Ovary (tissue), 10 donors: ENCODE measurements at regions of chr5 and their contacts with region 1.

Region 1: GRCh38 chr5:126594676-126595485 is at the start of gene ALDH7A1:
- DNase-seq: peak; percentile 93 to 95 (median 94)
- H3K4me3 ChIP-seq: peak within 1 kb of the TSS; percentile 48
- H3K27ac ChIP-seq: peak within 1 kb of the TSS; percentile 26 to 70
- H3K4me1 ChIP-seq: peaks cover 3% of the 10 kb centered on the region
- H3K27me3 ChIP-seq: no peaks in the 10 kb centered on the region
- CTCF ChIP-seq: peak in 2 of 3 donors; percentile 30 to 53
- EP300 ChIP-seq: no peak
- POLR2A ChIP-seq: peak; percentile 62
- total RNA-seq, gene ALDH7A1: 28.3 to 133 (median 99.2) TPM

Region 2: GRCh38 chr5:126348855-126349635 is 245.8 kb before region 1 on chr5:
- intact Hi-C with region 1: loop called in 3 of 4 experiments (anchors 5 to 10 kb)
- DNase-seq: no peak
- H3K4me3 ChIP-seq: no peak overlapping the region
- H3K27ac ChIP-seq: peak overlapping the region in 1 of 2 donors; percentile 41
- H3K4me1 ChIP-seq: peaks cover 2% of the 10 kb centered on the region
- H3K27me3 ChIP-seq: no peaks in the 10 kb centered on the region
- CTCF ChIP-seq: no peak
- EP300 ChIP-seq: no peak
- POLR2A ChIP-seq: no peak

Region 3: GRCh38 chr5:126544087-126544740 is 50.7 kb before region 1 on chr5:
- intact Hi-C with region 1: loop called in 3 of 4 experiments (anchors 5 to 10 kb)
- DNase-seq: no peak
- H3K4me3 ChIP-seq: no peak overlapping the region
- H3K27ac ChIP-seq: no peak overlapping the region
- H3K4me1 ChIP-seq: no peaks in the 10 kb centered on the region
- H3K27me3 ChIP-seq: no peaks in the 10 kb centered on the region
- CTCF ChIP-seq: peak in 1 of 3 donors; percentile 26
- EP300 ChIP-seq: no peak
- POLR2A ChIP-seq: no peak